Gastrocnemius medialis (tissue), 4 donors: ENCODE measurements at regions of chr2 and their contacts with region 1.

Region 1: GRCh38 chr2:232697100-232697865 is at the start of gene GIGYF2:
- DNase-seq: peak; percentile 62 to 97
- ATAC-seq: peak; percentile 93 to 95
- H3K4me3 ChIP-seq: peak within 1 kb of the TSS; percentile 81 to 99 (median 94)
- H3K27ac ChIP-seq: peak within 1 kb of the TSS; percentile 98 to 100 (median 99)
- H3K4me1 ChIP-seq: peaks cover 39 to 41% of the 10 kb centered on the region in 2 donors
- H3K27me3 ChIP-seq: no peaks in the 10 kb centered on the region
- CTCF ChIP-seq: peak in 3 of 5 experiments; percentile 9 to 41 (median 10)
- POLR2A ChIP-seq: peak; percentile 63 to 77
- total RNA-seq, gene GIGYF2: 55.7 to 87.8 (median 66.1) TPM

Region 2: DNA sequence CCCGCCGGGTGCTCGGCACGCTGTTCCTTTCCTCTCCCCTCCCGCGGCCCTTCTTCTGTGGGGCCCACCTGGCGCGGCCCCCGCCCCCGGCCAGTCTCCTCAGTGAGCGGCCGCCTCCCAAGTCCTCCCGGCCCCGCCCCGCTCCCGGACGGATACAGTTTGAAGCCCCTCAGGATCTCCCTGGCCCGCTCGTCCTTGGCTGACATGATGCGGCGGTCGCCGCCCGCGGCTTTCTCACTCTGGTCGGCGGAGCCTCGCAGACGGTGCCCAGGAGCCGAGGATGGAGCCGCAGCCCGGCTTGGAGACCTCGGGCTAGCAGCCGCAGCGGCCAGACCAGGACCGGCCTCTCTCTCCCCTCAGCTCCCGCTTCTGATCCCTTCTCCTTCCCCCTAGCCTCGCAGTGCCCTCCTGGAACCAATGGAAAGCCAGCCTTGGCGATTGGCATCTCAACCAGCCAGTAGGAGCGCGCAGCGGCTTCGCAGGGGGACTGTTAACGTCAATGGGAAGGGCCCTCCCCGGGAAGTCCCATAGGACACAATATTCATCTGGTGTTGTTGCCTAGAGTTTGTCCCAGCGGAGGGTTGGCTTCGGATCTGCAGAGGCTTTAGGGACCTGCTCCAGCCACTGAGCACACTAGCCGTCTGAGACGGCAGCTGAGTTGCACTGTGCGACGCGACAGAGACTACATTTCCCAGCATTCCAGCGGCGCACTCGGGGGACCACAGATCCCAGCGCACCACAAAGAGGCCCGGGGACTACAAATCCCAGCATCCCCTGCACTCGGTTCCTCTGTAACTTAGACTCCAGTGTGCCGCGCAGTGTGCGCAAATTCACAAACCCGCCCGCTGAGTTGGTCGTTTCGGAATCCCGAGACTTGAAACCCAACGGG is 916.1 kb before region 1 on chr2 and contains the start of gene PDE6D:
- in situ Hi-C with region 1: no loop called
- intact Hi-C with region 1: loop called (anchors 5 kb)
- DNase-seq: peak; percentile 97 to 99
- ATAC-seq: peak; percentile 98 to 99
- H3K4me3 ChIP-seq: peak within 1 kb of the TSS; percentile 75 to 99 (median 92)
- H3K27ac ChIP-seq: peak within 1 kb of the TSS; percentile 84 to 91 (median 90)
- H3K4me1 ChIP-seq: peaks cover 34 to 44% of the 10 kb centered on the region in 2 donors
- H3K27me3 ChIP-seq: no peaks in the 10 kb centered on the region
- CTCF ChIP-seq: no peak
- POLR2A ChIP-seq: peak; percentile 90 to 97
- total RNA-seq, gene PDE6D: 11.7 to 22.6 (median 17.6) TPM

Region 3: DNA sequence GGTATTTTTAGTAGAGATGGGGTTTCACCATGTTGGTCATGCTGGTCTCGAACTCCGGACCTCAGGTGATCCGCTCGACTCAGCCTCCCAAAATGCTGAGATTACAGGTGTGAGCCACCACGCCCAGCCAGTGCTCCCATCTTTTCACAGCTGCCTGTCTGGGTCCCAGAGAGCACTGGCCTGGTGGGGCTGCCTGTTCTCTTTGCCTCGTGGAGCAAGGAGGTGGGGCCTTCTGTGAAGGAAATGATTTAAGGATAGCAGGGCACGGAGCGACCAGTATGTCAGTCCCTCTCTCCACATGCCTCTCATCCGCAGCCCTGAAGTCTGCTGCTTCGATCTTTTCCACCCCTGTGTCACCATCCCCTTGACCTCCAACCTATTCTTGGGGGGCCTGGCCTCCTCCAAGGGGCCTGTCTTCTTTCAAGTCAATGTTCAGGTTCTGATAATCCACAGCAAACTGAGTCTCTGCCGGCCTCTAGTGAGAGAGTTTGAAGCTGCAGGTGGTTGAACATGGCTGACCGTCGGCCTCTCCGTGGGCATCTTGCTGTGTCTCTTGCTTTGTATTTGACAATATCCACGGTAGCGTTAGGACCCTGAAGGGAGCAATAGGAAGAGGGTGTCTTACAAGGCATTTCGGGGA is 28.4 kb before region 1 on chr2:
- in situ Hi-C with region 1: no loop called
- intact Hi-C with region 1: loop called (anchors 2 kb)
- DNase-seq: no peak
- ATAC-seq: peak; percentile 50 to 62
- H3K4me3 ChIP-seq: no peak overlapping the region
- H3K27ac ChIP-seq: peak overlapping the region in 2 of 4 donors; percentile 77 to 82
- H3K4me1 ChIP-seq: peaks cover 11 to 20% of the 10 kb centered on the region in 2 donors
- H3K27me3 ChIP-seq: no peaks in the 10 kb centered on the region
- CTCF ChIP-seq: peak in 4 of 5 experiments; percentile 32 to 46 (median 44)
- POLR2A ChIP-seq: no peak